ENCODE measurements at regions of chr17 and their contacts with region 1.

Region 1: DNA sequence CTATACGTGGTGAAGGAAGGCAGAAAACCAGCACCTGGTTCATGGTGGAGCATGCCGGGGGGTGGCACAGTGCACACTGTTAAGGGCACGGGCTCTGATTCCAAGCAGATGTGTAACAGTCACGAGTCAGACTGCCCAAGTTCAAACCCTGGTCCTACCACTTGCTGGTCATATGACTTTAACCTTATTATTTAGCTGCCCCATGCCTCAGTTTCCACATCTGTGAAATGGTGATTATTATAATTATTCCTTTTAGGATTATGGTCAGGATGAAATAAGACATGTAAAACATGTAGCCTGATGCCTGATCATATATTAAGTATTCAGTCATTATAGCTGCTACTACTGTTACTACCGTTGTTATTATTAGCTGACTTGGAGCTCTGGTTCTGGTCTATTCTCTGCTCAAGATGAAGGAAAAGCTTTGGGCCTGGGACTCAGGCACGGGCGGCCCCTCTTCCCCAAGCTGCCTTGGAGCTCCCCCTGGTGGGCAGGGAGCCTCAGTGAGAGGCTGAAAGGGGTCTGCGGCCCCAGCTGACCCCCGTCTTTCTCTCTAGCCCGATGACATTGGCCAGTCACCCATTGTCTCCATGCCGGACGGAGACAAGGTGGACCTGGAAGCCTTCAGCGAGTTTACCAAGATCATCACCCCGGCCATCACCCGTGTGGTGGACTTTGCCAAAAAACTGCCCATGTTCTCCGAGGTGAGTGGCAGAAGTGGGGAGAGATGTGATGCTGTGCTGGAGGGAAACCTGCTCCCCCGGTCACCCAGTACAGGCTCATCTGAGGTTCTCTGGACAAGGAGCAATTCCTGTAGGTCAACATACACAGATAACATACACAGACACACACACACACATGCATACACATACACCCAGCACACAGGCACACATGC is 14.0 kb downstream of the NR1D1 start:
- DNase-seq: peak; percentile 66
- ATAC-seq: peak; percentile 63
- H3K4me3 Mint-ChIP-seq: no peak overlapping the region
- H3K27ac Mint-ChIP-seq: no peak overlapping the region
- H3K4me1 Mint-ChIP-seq: no peaks in the 10 kb centered on the region
- H3K27me3 Mint-ChIP-seq: no peaks in the 10 kb centered on the region

Region 2: DNA sequence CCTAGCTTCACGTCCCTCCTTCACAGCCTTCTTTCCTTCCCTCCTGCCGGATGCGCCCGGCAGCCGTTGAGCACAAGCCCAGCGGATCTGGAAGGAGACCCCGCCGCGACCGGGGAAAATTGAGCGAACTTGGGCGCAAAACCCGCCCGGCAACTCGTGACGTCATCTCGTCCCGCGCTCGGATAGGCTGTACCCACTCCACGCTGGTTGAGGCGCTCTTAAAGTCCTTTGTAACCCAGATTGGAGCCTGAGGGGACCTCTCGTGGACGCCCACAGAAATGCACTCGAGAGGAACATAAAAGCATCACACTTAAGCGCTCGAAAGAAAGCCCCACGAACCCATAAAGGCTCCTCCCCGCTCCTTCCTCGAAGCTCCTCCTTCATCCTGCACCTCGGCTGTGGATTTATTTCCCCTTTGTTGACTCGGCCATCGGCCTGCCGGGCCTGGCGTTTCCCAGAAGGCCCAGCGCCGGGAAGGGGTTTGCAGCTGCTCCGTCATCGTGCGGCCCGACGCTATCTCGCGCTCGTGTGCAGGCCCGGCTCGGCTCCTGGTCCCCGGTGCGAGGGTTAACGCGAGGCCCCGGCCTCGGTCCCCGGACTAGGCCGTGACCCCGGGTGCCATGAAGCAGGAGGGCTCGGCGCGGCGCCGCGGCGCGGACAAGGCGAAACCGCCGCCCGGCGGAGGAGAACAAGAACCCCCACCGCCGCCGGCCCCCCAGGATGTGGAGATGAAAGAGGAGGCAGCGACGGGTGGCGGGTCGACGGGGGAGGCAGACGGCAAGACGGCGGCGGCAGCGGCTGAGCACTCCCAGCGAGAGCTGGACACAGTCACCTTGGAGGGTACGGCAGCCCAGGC is 105.8 kb before region 1 on chr17 and contains the start of gene PSMD3:
- CTCF ChIA-PET with region 1: no interaction called
- DNase-seq: peak; percentile 99
- ATAC-seq: peak; percentile 96
- H3K4me3 Mint-ChIP-seq: peak within 1 kb of the TSS; percentile 97
- H3K27ac Mint-ChIP-seq: peak within 1 kb of the TSS; percentile 88
- H3K4me1 Mint-ChIP-seq: peaks cover 34% of the 10 kb centered on the region
- H3K27me3 Mint-ChIP-seq: peaks cover 14% of the 10 kb centered on the region
- total RNA-seq, gene PSMD3: 106 to 138 TPM

Region 3: DNA sequence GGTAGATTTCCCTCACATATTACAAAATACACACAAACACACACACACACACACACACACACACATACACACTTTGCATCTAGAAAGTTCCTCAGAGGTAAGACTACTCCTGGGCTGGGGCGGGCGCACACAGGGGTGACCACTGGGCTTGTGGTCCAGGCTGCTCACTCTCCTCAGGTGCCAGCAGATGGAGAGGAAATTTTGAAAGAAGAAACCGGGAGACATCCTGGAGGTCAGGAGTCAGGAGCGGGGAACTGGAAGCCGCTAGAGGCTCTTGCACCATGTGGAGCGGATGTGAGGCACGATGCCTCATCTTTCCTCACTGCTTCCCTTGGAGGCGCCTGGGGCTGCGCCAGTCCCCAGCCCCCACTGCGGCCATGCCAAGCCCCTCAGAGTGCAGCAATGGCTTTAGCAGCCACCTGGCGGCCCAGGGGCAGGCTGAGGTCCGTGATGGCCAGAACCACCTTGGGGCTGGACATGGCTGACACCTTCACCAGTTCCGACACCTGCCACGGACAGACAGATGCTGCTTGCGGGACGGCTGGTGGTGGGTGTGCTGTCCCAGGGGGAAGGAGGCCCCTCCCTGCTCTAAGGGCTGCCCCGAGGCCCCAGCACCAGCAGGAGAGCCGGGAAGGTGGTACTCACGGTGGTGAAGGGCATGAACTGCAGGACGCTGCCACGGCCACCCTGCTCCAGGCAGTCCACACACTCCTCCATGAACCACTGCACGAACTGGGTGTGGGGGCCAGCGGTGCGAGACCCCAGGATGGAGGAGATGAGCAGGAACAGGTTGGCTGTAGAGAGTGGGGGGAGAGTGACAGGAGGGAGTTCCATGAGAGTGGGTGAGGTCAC is 67.0 kb before region 1 on chr17:
- CTCF ChIA-PET with region 1: interaction called, 14 read pairs
- DNase-seq: no peak
- ATAC-seq: no peak
- H3K4me3 Mint-ChIP-seq: no peak overlapping the region
- H3K27ac Mint-ChIP-seq: no peak overlapping the region
- H3K4me1 Mint-ChIP-seq: no peaks in the 10 kb centered on the region
- H3K27me3 Mint-ChIP-seq: no peaks in the 10 kb centered on the region

Region 4: DNA sequence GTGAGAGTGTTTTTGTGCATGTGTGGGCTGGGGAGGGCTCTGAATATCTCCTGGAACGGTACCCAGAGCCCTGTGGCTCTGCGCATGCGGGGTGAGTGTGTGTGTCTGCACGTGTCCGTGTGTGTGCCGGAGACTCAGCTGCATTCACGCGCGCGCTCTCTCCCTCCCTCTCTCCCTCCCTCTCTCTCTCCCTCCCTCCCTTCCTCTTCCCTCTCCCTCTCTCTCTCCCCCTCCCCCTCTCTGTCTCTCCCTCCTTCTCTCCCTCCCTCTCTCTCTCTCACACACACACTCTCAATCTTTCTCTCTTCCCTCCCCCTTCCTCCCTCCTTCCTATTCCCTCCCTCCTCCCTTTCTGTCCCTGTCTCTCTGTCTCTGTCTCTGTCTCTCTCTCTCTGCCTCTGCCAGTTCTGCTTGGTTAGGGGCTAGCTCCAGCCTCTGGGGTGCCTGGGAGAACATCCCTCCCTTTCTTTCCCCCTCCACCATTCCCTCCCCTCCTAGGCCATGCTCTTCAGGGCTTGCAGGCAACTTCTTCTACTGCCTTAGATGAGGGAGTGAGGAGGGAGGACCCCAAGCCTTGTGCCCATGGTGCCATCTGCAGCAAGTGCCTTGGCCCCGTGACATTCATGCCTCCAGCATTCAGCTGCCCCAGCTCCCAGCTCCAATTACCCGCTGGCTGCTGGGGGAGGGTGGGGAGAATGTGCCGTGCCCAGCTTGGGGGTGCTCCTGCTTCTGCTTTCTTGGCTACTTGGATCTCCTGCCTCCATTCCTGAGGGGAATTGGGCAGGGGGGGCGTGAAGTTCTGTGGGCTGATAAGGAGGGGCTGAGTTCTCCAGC is 17.3 kb before region 1 on chr17:
- CTCF ChIA-PET with region 1: interaction called, 59 read pairs
- DNase-seq: peak; percentile 84
- ATAC-seq: peak; percentile 83
- H3K4me3 Mint-ChIP-seq: peak overlapping the region; percentile 81
- H3K27ac Mint-ChIP-seq: peak overlapping the region; percentile 89
- H3K4me1 Mint-ChIP-seq: peaks cover 33% of the 10 kb centered on the region
- H3K27me3 Mint-ChIP-seq: peaks cover 1% of the 10 kb centered on the region

Region 5: DNA sequence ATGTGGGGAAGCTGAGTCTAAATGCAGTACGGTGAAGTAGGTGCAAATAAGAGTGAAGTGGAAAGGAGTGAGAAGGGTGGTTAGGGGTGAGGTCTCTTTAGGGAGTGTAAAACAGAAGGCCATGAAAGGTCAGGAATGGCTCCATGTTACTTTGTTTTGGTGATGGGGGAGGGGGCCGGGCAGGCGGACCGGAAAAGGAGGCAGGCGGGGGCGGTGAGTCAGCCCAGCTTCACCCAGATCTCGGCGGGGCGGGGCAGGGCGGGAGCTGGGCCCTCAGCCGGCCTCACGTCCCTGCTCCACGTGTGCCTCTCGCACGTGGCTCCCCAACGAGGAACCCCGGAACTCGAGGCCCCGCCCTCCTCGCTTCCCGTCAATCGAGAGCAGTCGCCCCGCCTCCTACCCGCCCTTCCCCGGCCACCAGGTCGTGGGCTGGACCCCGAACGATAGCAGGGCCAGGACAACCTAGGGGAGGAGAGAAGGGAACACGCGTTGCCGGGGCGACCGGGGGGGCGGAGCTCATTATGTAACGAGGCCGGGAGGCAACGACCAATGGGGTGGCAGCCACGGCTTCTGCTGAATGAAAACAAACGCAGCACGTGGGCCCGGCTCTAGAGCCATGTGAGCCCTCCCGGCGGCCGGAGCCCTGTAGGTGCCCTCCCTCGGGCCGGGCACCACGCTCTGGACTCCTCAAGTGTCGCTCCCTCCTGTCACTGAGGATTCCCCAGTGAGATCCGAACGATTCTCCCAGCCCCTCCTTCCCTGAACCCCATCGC is 12.6 kb after region 1 on chr17:
- CTCF ChIA-PET with region 1: interaction called, 18 read pairs
- DNase-seq: peak; percentile 99
- ATAC-seq: peak; percentile 65
- H3K4me3 Mint-ChIP-seq: peak overlapping the region; percentile 73
- H3K27ac Mint-ChIP-seq: peak overlapping the region; percentile 85
- H3K4me1 Mint-ChIP-seq: peaks cover 86% of the 10 kb centered on the region
- H3K27me3 Mint-ChIP-seq: no peaks in the 10 kb centered on the region

Measured in activated CD8-positive, alpha-beta memory T cell treated with anti-CD3 and anti-CD28 coated beads, Interleukin-2, amount 10 ng/mL, durations not matched to agents 7 days and 5 days (primary cell).